ENCODE measurements at regions of chr3 and their contacts with region 1.

Region 1: GRCh38 chr3:32154205-32154579 is 47.8 kb downstream of the GPD1L start:
- DNase-seq: no peak
- H3K4me3 ChIP-seq: no peak overlapping the region
- H3K27me3 ChIP-seq: no peaks in the 10 kb centered on the region
- CTCF ChIP-seq: 0 out of 2 replicates have a peak, but pooled peaks have one; percentile 19

Region 2: GRCh38 chr3:31839144-31839917 is 314.9 kb before region 1 on chr3:
- CTCF ChIA-PET with region 1: no interaction called
- POLR2A ChIA-PET with region 1: interaction called, 16 read pairs
- DNase-seq: no peak
- H3K4me3 ChIP-seq: no peak overlapping the region
- H3K27me3 ChIP-seq: no peaks in the 10 kb centered on the region
- CTCF ChIP-seq: no peak